Heart left ventricle (tissue), 16 donors: ENCODE measurements at regions of chr3 and their contacts with region 1.

Region 1: DNA sequence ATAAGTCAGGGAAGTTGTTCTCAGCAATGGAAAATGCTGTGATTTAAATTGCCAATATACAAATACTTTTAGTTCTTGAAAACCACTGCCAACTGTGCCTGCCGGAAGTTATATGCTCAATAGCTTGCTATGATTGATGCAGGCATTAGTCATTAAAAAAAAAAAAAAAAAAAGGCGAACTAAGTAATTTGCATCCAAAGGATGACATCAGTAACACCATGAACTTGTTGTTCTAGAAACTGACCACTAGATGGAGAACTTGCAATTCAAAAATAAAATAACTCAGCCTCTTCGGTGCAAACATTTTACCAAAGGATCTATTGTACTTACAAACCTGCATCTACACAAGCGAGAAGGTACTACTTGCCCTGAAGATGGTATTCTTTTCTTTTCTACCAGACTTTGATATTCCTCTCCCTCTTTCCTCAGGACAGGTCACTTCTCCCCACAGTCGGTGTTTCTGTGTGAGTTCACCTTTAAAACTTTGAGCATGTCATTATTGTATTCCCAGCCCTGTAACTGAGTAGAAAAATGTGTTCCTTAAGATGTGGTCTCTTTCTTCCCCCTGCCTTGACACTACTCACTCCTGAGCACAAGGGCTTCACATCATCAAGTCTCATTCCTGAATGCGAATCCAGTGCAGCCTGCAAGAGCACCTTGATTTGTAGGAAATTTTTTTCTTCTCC is 115.0 kb upstream of the VEPH1 start:
- DNase-seq: no peak
- ATAC-seq: peak in 3 of 4 donors; percentile 32 to 51 (median 39)
- H3K4me3 ChIP-seq: no peak overlapping the region
- H3K27ac ChIP-seq: no peak overlapping the region
- H3K4me1 ChIP-seq: peaks cover 0 to 6% (median 0%) of the 10 kb centered on the region in 12 donors
- H3K27me3 ChIP-seq: peaks cover 0 to 3% (median 0%) of the 10 kb centered on the region in 9 donors
- CTCF ChIP-seq: peak; percentile 49 to 72 (median 66)
- POLR2A ChIP-seq: no peak

Region 2: DNA sequence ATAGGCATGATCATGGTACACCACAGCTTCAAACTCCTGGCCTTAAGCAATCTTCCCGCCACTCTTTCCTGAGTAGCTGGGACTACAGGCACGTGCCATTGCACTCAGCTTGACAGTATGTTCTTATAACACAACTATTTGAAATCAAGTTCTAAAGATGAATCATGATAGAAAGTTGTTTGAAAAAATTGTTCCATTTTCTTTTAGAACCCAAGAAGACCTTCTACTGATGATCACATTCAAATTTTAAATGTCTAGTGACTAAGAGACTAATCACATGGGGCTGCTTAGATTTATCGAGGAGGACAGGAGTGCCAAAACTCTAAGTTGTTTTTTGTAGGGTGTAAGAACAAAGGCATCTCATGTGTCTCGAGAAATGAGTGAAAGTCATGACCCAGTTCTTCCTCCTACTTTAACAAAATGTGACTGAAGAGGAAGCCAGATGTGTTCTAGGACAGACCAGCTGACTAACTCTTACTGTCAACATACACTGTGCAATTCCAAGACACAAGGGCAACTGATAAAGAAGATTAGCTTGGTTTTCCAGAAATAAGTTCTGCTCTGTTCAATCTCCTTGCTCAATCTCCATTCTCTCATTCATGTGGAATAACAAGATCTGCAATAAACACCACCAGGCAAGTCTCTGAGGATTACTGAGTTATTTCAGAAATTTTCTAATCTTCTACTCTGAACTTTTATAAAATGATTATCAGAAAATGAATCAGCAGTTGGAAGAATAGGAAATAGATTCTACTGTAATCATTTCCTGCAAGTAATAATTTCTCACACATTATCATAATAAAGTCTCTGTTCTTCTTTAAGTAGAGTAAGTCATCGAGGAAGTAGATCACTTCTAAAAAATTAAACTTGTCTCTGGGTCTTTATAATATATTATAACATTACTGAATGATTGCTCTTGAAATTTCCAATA is 335.7 kb before region 1 on chr3:
- intact Hi-C with region 1: no loop called
- DNase-seq: peak in 2 of 5 donors; percentile 36 to 50
- ATAC-seq: peak; percentile 84 to 96 (median 90)
- H3K4me3 ChIP-seq: no peak overlapping the region
- H3K27ac ChIP-seq: peak overlapping the region in 8 of 12 donors; percentile 11 to 48 (median 31)
- H3K4me1 ChIP-seq: peaks cover 0 to 15% (median 0%) of the 10 kb centered on the region in 12 donors
- H3K27me3 ChIP-seq: no peaks in the 10 kb centered on the region
- CTCF ChIP-seq: no peak
- POLR2A ChIP-seq: no peak

Region 3: GRCh38 chr3:157360044-157360443 is 258.2 kb before region 1 on chr3:
- intact Hi-C with region 1: no loop called
- DNase-seq: no peak
- ATAC-seq: peak in 1 of 4 donors; percentile 68
- H3K4me3 ChIP-seq: no peak overlapping the region
- H3K27ac ChIP-seq: no peak overlapping the region
- H3K4me1 ChIP-seq: no peaks in the 10 kb centered on the region
- H3K27me3 ChIP-seq: no peaks in the 10 kb centered on the region
- CTCF ChIP-seq: no peak
- POLR2A ChIP-seq: no peak

Region 4: DNA sequence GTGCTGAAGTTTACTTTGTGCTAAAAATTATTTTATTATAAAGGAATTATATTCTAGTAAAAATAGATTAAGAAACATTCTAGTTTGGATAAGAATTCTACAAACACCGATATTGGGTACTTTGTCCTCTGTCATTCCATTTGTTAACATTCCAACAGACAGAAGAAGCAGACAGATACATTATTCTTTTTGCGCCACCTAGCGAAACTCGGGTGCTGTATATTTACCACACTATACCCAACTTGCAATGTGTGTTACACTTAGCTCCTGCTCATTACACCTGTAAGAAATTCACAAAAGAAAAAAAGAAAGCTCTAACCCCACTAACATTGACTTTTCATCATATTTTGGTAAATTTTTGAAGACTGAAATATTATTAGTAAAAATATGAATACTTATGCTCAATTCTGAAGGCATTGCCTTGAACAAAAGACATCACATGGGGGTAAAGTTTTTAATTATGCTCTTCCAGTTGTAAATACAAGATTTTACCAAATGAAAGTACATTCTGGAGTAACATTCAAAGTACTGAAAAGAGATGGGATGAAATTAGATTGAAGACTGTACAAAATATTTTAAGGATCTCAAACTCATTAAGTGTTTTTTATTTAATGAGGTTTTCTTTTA is 816.3 kb after region 1 on chr3:
- intact Hi-C with region 1: loop called (anchors 2 to 5 kb)
- DNase-seq: peak in 4 of 5 donors; percentile 31 to 52 (median 37)
- ATAC-seq: peak in 3 of 4 donors; percentile 78 to 83 (median 79)
- H3K4me3 ChIP-seq: no peak overlapping the region
- H3K27ac ChIP-seq: no peak overlapping the region
- H3K4me1 ChIP-seq: no peaks in the 10 kb centered on the region
- H3K27me3 ChIP-seq: no peaks in the 10 kb centered on the region
- CTCF ChIP-seq: peak; percentile 33 to 87 (median 72)
- POLR2A ChIP-seq: no peak

Region 5: DNA sequence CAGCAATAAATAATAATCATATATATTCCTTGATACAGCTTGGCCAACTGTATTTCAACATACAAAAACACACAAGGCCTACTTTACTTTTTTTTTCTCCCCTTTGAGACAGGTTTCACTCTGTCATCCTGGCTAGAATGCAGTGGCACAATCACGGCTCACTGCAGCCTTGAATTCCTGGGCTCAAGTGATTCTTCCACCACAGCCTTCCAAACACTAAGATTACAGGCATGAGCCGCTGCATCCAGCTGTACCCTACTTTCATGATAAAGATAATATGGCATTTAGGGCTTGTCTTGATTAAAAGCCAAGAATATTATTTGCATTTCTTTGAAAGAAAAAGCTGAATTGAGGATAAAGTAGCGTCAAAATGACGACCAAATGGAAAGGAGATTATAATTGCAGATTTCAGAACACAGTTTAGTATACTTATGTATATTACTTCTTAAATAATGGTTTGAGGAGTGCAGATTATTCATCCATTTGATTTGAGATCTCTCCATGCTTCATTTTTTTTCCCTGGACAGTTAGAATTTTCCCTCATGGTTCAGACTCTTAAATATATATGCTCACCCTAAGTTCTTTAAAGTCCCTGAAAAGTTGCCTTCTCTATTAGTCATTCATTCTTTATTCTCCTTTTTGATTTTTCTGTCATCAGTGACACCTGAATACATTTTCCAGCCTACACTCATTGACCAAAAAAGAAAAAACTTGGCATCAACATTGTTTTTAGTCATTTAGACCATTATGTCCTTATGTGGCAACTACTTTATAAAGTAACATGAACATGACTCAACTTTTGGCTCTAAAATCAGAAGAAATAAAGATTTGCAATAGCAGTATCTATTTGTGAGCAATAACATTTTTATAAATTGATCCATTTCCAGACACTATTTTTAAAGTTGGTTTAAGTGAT is 904.3 kb after region 1 on chr3:
- intact Hi-C with region 1: loop called in 2 of 10 experiments (anchors 5 to 10 kb)
- DNase-seq: no peak
- ATAC-seq: no peak
- H3K4me3 ChIP-seq: no peak overlapping the region
- H3K27ac ChIP-seq: no peak overlapping the region
- H3K4me1 ChIP-seq: peaks cover 0 to 16% (median 0%) of the 10 kb centered on the region in 12 donors
- H3K27me3 ChIP-seq: no peaks in the 10 kb centered on the region
- CTCF ChIP-seq: no peak
- POLR2A ChIP-seq: no peak

Region 6: DNA sequence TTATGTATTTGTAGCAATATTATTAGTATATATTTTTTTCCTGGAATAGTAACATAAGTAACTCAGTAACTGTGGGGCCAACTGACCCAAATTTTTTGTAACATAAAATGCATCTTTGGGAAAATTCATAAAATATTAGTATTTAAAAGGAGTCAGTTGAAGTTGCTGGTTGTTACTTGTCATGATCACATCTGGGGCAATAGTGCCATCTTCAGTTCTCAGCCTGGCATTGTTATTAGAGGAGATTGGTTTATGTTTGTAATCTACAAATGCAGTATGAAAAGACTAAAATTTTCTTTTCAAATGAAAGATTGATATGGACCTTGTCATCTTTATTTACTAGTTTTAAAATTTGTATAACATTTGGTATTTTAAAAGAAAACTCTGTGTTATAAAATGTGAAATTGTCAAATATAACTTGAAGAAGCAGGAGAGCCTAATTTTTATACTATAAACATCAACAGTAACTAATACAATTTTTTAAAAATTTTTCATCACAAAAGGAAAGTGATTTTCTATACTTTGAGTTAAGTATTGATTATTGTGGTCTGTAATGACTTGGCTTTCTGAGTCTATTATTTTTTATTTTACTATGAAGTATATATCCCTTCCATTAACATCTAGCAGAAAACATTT is 914.0 kb after region 1 on chr3:
- intact Hi-C with region 1: loop called (anchors 2 to 10 kb)
- DNase-seq: peak in 1 of 5 donors; percentile 10
- ATAC-seq: peak in 1 of 4 donors; percentile 55
- H3K4me3 ChIP-seq: no peak overlapping the region
- H3K27ac ChIP-seq: no peak overlapping the region
- H3K4me1 ChIP-seq: no peaks in the 10 kb centered on the region
- H3K27me3 ChIP-seq: no peaks in the 10 kb centered on the region
- CTCF ChIP-seq: peak; percentile 25 to 69 (median 56)
- POLR2A ChIP-seq: no peak

Region 7: DNA sequence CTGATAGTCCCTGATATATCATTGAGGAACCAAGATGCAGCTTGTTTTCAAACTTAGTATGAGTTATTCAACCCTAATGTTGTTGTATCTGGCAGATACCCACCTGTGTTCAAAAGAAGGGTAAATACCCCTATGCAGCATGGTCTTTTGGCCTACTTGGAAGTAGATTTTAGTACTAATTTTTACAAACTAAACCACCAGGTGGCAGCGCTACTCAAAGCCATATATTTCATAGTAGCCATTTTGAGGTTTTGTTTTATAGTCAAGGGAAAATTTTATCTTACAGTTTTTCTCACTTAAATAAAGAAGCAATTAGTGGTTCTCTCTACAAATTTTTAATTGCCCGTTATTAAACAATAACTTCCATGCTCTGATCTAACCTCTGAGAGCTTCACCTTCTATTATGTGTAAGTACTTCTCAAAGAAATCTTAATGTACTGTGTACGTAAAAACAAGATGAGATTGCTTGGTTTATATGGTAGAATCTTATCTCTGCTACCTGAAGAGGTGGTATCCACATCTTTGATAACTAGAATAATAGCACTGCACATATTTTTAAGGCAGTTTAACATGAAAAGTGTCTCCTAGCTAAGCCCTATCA is 921.3 kb after region 1 on chr3:
- intact Hi-C with region 1: loop called in 7 of 10 experiments (anchors 5 kb)
- DNase-seq: peak in 1 of 5 donors; percentile 7
- ATAC-seq: peak in 1 of 4 donors; percentile 50
- H3K4me3 ChIP-seq: no peak overlapping the region
- H3K27ac ChIP-seq: no peak overlapping the region
- H3K4me1 ChIP-seq: no peaks in the 10 kb centered on the region
- H3K27me3 ChIP-seq: no peaks in the 10 kb centered on the region
- CTCF ChIP-seq: peak; percentile 37 to 70 (median 61)
- POLR2A ChIP-seq: no peak

Region 8: GRCh38 chr3:158790901-158791589 is 1172.8 kb after region 1 on chr3:
- intact Hi-C with region 1: loop called in 1 of 10 experiments (anchors 10 kb)
- DNase-seq: peak in 1 of 5 donors; percentile 32
- ATAC-seq: peak in 2 of 4 donors; percentile 45 to 65
- H3K4me3 ChIP-seq: peak overlapping the region in 5 of 12 donors; percentile 11 to 32 (median 21)
- H3K27ac ChIP-seq: no peak overlapping the region
- H3K4me1 ChIP-seq: peaks cover 0 to 10% (median 0%) of the 10 kb centered on the region in 12 donors
- H3K27me3 ChIP-seq: no peaks in the 10 kb centered on the region
- CTCF ChIP-seq: peak; percentile 74 to 95 (median 86)
- POLR2A ChIP-seq: no peak